Right ventricle myocardium inferior (tissue), 1 donor: ENCODE measurements at regions of chr3 and their contacts with region 1.

Region 1: DNA sequence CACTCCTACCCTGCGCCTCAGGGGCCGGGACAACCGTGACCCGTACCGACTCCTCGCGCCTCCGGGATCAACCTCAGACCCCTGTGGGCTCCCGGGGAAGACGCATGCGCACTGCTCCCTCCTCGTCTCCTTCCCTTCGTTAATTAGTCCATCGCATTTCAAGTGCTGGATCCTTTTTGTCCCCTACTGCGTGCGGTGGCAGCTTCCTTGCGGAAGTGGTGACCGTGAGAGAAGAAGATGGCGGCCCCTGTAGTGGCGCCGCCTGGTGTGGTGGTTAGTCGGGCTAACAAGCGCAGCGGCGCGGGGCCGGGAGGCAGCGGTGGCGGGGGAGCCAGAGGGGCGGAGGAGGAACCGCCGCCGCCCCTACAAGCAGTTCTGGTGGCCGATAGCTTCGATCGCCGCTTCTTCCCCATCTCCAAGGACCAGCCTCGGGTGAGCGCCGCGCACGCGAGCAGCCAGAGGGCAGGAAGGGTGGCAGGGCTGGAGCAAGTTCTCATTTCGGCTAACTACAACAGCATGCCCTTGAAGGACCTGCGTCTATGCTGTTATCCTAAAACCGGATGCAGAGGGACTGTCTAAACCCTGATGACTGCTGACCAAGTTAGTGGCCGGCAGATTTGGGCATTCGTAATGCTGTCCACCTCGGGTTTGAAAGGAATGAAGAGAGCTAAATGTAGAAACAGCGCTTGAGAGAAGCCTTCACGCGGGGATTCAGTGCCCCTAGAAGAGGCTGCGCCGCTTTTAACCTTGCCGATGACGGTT is at the start of gene EIF2B5:
- DNase-seq: peak; percentile 95
- ATAC-seq: peak; percentile 97
- total RNA-seq, gene EIF2B5: 32.2 TPM

Region 2: GRCh38 chr3:183991403-183991802 is 143.9 kb before region 1 on chr3:
- intact Hi-C with region 1: no loop called
- DNase-seq: no peak
- ATAC-seq: no peak

Region 3: GRCh38 chr3:184017672-184018423 is 117.5 kb before region 1 on chr3 and contains the start of gene ABCC5:
- intact Hi-C with region 1: loop called (anchors 5 kb)
- DNase-seq: peak; percentile 97
- ATAC-seq: peak; percentile 99
- total RNA-seq, gene ABCC5: 48.2 TPM

Region 4: DNA sequence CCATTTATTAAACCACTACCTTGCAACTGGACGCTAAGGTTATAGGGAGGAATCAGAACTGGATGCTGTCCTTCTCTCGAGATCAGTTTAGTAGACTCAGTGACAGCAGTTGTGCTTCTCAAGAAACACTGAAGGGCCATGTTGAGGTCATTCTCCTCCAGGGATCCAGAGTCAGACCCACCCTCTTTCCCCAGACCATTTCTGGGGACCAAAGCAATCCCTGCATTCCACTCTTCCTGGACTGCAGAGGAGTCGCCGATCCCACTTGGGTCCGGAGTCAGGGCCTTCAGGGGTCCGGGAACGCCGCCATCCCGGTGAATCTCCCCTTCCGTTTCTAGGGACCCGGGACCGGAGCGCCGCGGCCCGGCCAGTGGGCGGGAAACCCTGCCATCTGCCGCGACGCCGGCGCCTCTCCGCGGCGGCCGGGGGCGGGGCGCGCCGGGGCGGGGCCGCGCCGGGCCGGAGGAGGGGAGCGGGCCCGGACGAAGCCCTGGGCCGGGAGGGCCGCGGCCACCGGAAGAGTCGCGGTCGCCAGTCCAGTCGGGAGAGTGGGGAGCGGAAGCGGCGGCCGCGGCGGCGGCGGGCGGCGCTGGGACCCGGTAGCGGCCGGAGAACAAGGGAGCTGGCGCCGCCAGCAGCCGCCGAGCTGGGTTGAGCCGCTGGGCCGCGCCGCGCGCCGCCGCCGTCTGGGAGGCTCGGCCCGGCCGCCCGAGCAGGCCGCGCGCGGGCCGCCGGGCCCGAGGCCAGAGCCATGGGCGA is 19.7 kb after region 1 on chr3 and contains the start of gene DVL3:
- intact Hi-C with region 1: loop called (anchors 2 kb)
- DNase-seq: peak; percentile 85
- ATAC-seq: peak; percentile 90
- total RNA-seq, gene DVL3: 60.7 TPM

Region 5: DNA sequence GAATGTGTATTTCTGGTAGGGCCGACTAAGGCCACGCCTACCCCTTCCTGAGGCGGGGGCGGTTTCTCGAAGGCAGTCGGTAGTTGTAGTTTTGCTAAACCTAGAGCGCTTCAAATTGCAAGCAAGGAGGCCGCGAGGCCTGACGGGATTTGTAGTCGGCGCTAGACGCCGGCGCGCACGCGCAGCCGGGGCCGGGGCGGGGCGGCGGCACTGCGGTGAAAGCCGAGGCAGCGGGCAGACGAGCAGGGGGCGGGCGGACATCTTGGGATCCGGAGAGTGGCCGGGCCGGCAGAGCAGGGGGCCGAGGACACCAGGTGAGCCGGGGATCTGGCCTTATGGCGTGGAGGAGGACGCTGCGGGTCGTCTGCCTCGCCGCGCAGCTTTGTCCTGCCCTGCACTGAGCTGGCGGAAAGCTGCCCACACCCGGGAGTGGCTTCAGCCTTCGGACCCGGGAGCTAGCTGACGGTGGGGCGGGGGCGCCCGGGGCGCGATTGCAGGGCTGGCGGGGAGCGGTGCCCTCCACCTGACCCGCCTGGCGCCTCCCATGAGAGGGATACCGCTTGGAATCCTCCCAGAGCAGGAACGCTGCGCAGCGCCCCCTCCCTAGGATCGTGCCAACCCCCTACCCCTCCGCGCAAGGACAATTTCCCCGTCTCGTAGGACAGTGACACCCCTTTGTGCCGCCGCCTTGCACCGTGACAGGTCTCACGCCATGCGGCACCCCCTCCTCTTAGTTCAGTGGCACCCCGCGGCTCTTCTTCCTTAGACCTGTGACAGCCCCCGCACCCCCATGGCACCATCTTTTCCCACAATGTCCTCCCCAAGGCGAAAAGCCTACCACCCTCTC is 39.5 kb after region 1 on chr3 and contains the start of gene AP2M1:
- intact Hi-C with region 1: loop called (anchors 2 kb)
- DNase-seq: peak; percentile 99
- ATAC-seq: peak; percentile 95
- total RNA-seq, gene AP2M1: 269 TPM